Psoas muscle (tissue), 8 donors: ENCODE measurements at regions of chr6 and their contacts with region 1.

Region 1: DNA sequence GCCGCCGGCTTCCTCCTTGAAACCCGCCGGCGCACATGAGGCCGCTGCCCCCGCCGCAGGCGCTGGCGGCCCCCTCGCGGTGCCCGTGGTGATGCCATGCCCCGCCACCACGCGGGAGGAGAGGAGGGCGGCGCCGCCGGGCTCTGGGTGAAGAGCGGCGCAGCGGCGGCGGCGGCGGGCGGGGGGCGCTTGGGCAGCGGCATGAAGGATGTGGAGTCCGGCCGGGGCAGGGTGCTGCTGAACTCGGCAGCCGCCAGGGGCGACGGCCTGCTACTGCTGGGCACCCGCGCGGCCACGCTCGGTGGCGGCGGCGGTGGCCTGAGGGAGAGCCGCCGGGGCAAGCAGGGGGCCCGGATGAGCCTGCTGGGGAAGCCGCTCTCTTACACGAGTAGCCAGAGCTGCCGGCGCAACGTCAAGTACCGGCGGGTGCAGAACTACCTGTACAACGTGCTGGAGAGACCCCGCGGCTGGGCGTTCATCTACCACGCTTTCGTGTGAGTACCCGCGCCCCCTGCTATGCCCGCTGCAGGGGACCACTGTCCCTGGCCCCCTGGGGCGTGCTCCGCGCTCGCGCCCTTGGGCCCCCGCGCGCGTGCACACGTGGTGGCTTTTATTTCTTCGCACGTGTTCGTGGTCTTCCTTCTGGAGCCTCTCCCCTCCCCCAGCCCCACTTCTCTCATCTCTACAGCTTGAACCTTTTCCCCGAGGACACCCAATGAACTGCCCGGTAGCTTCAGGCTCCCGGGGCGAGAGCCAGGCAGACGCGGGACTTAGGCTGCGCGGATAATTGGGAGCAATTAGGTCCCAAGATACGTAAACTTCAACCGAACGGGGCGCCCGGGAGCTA is 453 bp downstream of the KCNQ5 start:
- DNase-seq: peak; percentile 52 to 84
- ATAC-seq: peak; percentile 67 to 73 (median 72)
- H3K4me3 ChIP-seq: peak overlapping the region; percentile 86
- H3K27ac ChIP-seq: peak overlapping the region; percentile 88
- H3K4me1 ChIP-seq: peaks cover 21% of the 10 kb centered on the region
- H3K27me3 ChIP-seq: no peaks in the 10 kb centered on the region
- CTCF ChIP-seq: peak; percentile 41

Region 2: DNA sequence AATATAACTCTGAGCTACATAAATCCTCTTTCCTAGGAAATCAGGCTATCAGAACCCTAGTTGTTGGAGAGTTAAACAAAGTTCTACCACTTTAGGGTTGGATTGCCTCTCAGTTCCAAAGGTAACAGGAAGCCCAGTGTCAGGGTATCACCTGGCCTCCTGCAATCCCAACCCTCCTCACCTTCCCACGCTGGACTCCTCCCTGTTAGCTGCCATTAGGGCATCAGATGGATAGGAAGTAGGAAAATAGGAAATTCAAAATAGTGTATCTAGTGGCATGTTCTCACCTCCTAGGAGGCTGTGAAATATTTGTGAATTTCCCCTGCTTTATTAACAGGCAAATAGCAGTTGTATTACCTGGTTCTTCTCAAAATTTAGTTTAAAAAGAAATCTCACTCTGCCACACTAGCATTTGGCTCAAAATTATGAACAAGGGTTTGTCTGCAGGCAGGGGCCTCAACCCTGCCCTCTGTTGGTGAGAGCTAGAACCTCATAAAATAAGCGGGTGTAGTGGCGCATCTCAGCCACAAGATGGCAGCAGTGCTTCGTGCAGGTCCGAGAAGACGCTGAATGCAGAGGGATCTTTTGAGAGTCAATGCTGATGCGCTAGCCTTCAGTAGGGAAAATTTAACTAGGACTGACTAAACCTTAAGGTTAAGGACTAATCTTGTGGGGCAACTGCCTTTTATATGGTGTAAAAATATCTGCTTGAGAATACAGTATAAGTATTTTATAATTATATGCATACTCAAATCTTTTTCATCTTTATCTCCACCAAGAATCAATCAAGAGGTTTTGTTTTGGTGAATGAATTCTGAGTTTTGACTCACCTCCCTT is 210.2 kb before region 1 on chr6:
- intact Hi-C with region 1: loop called in 1 of 2 experiments (anchors 10 kb)
- DNase-seq: peak; percentile 44 to 79
- ATAC-seq: peak; percentile 90 to 98 (median 94)
- H3K4me3 ChIP-seq: no peak overlapping the region
- H3K27ac ChIP-seq: no peak overlapping the region
- H3K4me1 ChIP-seq: no peaks in the 10 kb centered on the region
- H3K27me3 ChIP-seq: no peaks in the 10 kb centered on the region
- CTCF ChIP-seq: peak; percentile 100

Region 3: DNA sequence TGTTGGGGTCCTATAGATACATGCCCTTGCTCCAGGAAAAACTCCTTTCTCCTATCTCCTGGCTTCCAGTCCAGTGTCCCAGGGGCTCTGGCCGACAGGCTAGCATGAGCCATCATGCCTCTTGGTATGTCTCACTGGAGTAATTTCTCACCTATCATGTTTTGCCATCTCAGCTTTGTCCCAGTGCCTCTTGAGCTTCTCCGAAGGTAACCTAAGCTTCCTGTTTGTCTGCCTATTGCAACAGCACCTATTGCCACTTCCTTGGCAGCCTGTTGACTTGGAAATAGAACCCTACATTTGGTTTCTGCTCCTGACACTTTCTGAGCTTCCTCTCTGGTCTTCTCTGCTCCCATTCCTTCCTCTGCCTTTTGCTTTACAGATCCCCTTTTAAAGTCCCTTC is 197.3 kb after region 1 on chr6:
- intact Hi-C with region 1: loop called in 1 of 2 experiments (anchors 5 kb)
- DNase-seq: peak; percentile 21 to 74
- ATAC-seq: peak; percentile 94 to 98 (median 97)
- H3K4me3 ChIP-seq: no peak overlapping the region
- H3K27ac ChIP-seq: peak overlapping the region; percentile 89
- H3K4me1 ChIP-seq: peaks cover 68% of the 10 kb centered on the region
- H3K27me3 ChIP-seq: no peaks in the 10 kb centered on the region
- CTCF ChIP-seq: no peak

Region 4: DNA sequence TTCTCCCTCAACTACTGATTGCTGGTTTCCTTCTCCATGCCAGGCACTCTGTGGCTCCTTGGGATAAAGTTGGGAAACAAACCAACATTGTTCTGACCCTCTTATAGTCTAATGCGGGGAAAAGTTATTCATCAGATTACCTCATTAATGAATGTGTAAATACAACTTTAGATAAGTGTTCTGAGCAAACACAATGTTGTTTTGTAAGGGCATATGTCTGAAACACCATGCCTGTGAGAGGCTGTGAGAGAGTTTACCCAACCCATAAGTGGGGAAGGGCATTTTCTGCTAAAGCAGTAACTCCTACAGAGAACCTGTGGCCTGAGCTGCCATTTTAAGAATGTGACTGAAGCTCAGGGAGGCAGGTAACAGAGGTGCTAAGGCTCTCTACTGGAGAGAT is 319.4 kb after region 1 on chr6:
- intact Hi-C with region 1: loop called (anchors 5 to 10 kb)
- DNase-seq: no peak
- ATAC-seq: no peak
- H3K4me3 ChIP-seq: no peak overlapping the region
- H3K27ac ChIP-seq: peak overlapping the region; percentile 92
- H3K4me1 ChIP-seq: peaks cover 29% of the 10 kb centered on the region
- H3K27me3 ChIP-seq: no peaks in the 10 kb centered on the region
- CTCF ChIP-seq: no peak

Region 5: GRCh38 chr6:73129653-73130443 is 507.5 kb after region 1 on chr6:
- intact Hi-C with region 1: loop called (anchors 2 to 5 kb)
- DNase-seq: peak; percentile 76 to 89
- ATAC-seq: peak; percentile 82 to 93 (median 88)
- H3K4me3 ChIP-seq: peak overlapping the region; percentile 43
- H3K27ac ChIP-seq: peak overlapping the region; percentile 60
- H3K4me1 ChIP-seq: peaks cover 12% of the 10 kb centered on the region
- H3K27me3 ChIP-seq: no peaks in the 10 kb centered on the region
- CTCF ChIP-seq: peak; percentile 91